ENCODE measurements at regions of chr12 and their contacts with region 1.

Region 1: DNA sequence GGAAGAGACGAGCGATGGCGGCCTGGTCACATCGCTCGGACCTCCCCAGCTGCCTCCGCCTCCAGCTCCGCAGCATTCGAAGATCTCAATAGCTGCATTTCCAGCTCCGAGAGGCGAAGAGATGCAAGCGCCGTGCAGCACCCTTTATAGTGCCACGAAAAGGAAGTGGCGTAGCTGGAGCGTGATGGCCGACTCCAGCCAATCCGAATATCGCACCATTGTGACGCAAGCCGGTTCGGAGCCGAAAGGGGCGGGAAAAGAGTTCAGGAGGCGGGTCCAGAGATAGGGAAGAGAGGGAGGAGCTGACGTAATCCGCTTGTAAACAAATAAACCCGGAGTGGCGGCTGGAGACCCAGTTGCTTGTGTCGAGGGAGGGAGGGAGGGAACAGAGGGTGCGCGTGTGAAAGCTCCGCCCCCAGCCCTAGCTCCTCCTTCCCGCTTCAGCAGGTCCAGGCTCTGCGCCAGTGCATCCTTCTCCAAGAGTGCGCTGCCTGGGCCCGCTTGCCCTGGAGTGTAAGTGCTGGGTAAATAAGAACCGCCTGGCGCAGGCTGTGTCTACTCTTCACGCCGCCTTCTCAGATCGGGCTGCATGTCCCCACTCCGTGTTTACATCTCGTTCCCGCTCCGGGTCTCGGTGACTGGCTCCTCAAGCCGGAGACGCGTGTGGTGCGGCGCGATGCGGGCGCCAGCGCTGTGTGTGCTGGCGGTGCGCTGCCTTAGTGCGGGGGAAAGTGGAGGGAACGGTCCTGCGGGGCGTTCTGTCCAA is at the start of gene BTG1:
- DNase-seq: peak; percentile 98
- H3K4me3 ChIP-seq: peak within 1 kb of the TSS; percentile 86
- H3K27ac ChIP-seq: peak within 1 kb of the TSS; percentile 96
- H3K4me1 ChIP-seq: peaks cover 42% of the 10 kb centered on the region
- H3K27me3 ChIP-seq: no peaks in the 10 kb centered on the region
- CTCF ChIP-seq: no peak
- total RNA-seq, gene BTG1: 72.4 and 111 TPM in 2 replicates

Region 2: GRCh38 chr12:91441993-91442952 is 703.6 kb before region 1 on chr12:
- CTCF ChIA-PET with region 1: no interaction called
- POLR2A ChIA-PET with region 1: interaction called, 12 read pairs
- intact Hi-C with region 1: no loop called
- DNase-seq: no peak
- H3K4me3 ChIP-seq: no peak overlapping the region
- H3K27ac ChIP-seq: no peak overlapping the region
- H3K4me1 ChIP-seq: no peaks in the 10 kb centered on the region
- H3K27me3 ChIP-seq: no peaks in the 10 kb centered on the region
- CTCF ChIP-seq: no peak

Region 3: GRCh38 chr12:91778938-91779400 is 366.9 kb before region 1 on chr12:
- CTCF ChIA-PET with region 1: no interaction called
- POLR2A ChIA-PET with region 1: interaction called, 8 read pairs
- intact Hi-C with region 1: loop called (anchors 2 kb)
- DNase-seq: peak; percentile 61 to 97
- H3K4me3 ChIP-seq: peak overlapping the region; percentile 22; the same call in 1 of the 2 replicates
- H3K27ac ChIP-seq: peak overlapping the region; percentile 98
- H3K4me1 ChIP-seq: peaks cover 30% of the 10 kb centered on the region
- H3K27me3 ChIP-seq: no peaks in the 10 kb centered on the region
- CTCF ChIP-seq: no peak

Region 4: GRCh38 chr12:91890742-91891141 is 255.2 kb before region 1 on chr12:
- CTCF ChIA-PET with region 1: no interaction called
- POLR2A ChIA-PET with region 1: interaction called, 10 read pairs
- intact Hi-C with region 1: loop called (anchors 2 kb)
- DNase-seq: peak; percentile 16 to 65
- H3K4me3 ChIP-seq: no peak overlapping the region
- H3K27ac ChIP-seq: no peak overlapping the region
- H3K4me1 ChIP-seq: peaks cover 39% of the 10 kb centered on the region
- H3K27me3 ChIP-seq: no peaks in the 10 kb centered on the region
- CTCF ChIP-seq: no peak

Region 5: GRCh38 chr12:92224685-92225331 is 78.9 kb after region 1 on chr12:
- CTCF ChIA-PET with region 1: no interaction called
- POLR2A ChIA-PET with region 1: interaction called, 10 read pairs
- intact Hi-C with region 1: no loop called
- DNase-seq: peak; percentile 47 to 84
- H3K4me3 ChIP-seq: no peak overlapping the region
- H3K27ac ChIP-seq: peak overlapping the region; percentile 31
- H3K4me1 ChIP-seq: peaks cover 14% of the 10 kb centered on the region
- H3K27me3 ChIP-seq: no peaks in the 10 kb centered on the region
- CTCF ChIP-seq: no peak

Region 6: GRCh38 chr12:92408072-92408900 is 262.4 kb after region 1 on chr12:
- CTCF ChIA-PET with region 1: no interaction called
- POLR2A ChIA-PET with region 1: interaction called, 8 read pairs
- intact Hi-C with region 1: loop called (anchors 2 kb)
- DNase-seq: peak; percentile 38 to 39
- H3K4me3 ChIP-seq: no peak overlapping the region
- H3K27ac ChIP-seq: no peak overlapping the region
- H3K4me1 ChIP-seq: no peaks in the 10 kb centered on the region
- H3K27me3 ChIP-seq: no peaks in the 10 kb centered on the region
- CTCF ChIP-seq: peak; percentile 67

Region 7: DNA sequence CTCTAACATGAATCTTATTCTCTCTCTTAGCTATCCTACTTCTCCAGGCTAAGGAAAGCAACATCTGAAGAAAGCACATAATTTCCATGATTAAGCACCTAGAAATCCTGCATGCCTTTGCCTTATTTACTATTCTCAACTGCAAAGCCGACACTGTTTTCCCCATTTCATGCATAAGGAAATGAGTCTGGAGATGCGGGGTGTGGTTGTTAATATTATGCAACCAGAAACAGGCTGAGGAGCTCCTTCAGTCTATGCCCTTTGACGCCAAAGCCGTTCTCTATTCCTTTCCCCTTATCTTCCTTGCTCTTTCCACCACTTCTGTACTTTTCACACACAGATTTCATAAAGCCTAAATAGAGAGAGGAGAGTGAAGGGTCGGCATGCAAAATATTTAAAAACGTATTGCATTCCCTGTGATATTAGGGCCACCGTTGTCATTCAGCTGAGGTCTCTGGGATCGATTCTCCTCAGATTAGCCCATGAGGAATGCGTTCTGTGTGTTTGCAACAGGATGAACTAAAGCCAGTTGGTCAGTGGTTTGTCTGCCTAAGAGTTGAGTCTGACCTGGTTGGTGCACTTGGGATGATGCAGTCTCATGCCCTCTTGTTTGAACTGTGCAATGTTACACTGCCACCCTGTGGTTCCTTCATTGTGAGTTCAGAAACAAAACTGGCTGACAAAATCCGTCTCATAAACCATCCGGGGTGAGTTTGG is 503.8 kb after region 1 on chr12:
- CTCF ChIA-PET with region 1: no interaction called
- POLR2A ChIA-PET with region 1: no interaction called
- intact Hi-C with region 1: loop called (anchors 2 kb)
- DNase-seq: peak; percentile 53 to 54
- H3K4me3 ChIP-seq: no peak overlapping the region
- H3K27ac ChIP-seq: no peak overlapping the region
- H3K4me1 ChIP-seq: peaks cover 15% of the 10 kb centered on the region
- H3K27me3 ChIP-seq: no peaks in the 10 kb centered on the region
- CTCF ChIP-seq: peak; percentile 78

Measured in PC-9 (cell line).